ENCODE measurements at regions of chr3 and their contacts with region 1.

Region 1: GRCh38 chr3:136818769-136819391 is at the start of gene SLC35G2:
- DNase-seq: peak; percentile 87
- H3K4me3 ChIP-seq: peak within 1 kb of the TSS; percentile 77 to 81
- H3K27ac ChIP-seq: peak within 1 kb of the TSS; percentile 87 to 96
- H3K4me1 ChIP-seq: peaks cover 10% of the 10 kb centered on the region in 2 experiments; a peak in 3 of 4 replicates
- H3K27me3 ChIP-seq: no peaks in the 10 kb centered on the region
- CTCF ChIP-seq: no peak
- EP300 ChIP-seq: no peak
- RAD21 ChIP-seq: peak; percentile 24; the same call in 1 of the 2 replicates
- polyA plus RNA-seq, gene SLC35G2: 9.7 and 10.6 TPM in 2 replicates

Region 2: GRCh38 chr3:136861890-136862616 is 43.2 kb after region 1 on chr3 and contains the start of gene NCK1:
- CTCF ChIA-PET with region 1: no interaction called
- POLR2A ChIA-PET with region 1: interaction called, 11 read pairs
- DNase-seq: peak; percentile 95
- H3K4me3 ChIP-seq: peak within 1 kb of the TSS; percentile 71 to 84
- H3K27ac ChIP-seq: peak within 1 kb of the TSS; percentile 83 to 90
- H3K4me1 ChIP-seq: peaks cover 5 to 6% of the 10 kb centered on the region in 2 experiments; a peak in 3 of 4 replicates
- H3K27me3 ChIP-seq: no peaks in the 10 kb centered on the region
- CTCF ChIP-seq: peak; percentile 28; the same call in 1 of the 2 replicates
- EP300 ChIP-seq: no peak
- RAD21 ChIP-seq: no peak
- polyA plus RNA-seq, gene NCK1: 16.2 and 17.5 TPM in 2 replicates

Region 3: GRCh38 chr3:136893848-136894443 is 75.1 kb after region 1 on chr3:
- CTCF ChIA-PET with region 1: no interaction called
- POLR2A ChIA-PET with region 1: no interaction called
- DNase-seq: no peak
- H3K4me3 ChIP-seq: no peak overlapping the region
- H3K27ac ChIP-seq: no peak overlapping the region
- H3K4me1 ChIP-seq: peaks cover 2 to 10% of the 10 kb centered on the region in 2 experiments; a peak in 2 of 4 replicates
- H3K27me3 ChIP-seq: no peaks in the 10 kb centered on the region
- CTCF ChIP-seq: no peak
- EP300 ChIP-seq: no peak
- RAD21 ChIP-seq: no peak